Mammary epithelial cell (primary cell): ENCODE measurements at regions of chr13 and their contacts with region 1.

Region 1: DNA sequence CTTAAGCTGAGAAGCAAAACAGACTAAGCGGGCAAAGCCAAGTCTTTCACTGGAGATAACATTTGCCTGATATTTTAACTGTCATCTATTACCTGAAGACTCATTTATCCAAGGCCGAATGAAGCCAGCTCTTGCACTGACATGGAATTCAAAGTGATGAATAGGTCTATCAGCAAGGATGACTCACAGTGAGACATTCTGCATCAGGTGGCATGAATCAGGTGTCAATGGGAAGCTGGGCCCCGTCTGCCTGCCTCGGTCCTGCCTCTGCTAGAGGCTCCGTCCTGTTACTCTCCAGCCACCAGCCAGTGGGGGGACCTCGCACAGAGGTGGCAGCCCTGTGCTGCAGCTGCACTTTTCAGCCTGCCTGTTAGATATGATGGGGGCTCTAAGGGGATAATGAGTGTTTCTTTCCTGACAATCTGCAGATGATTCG is 23.5 kb downstream of the STARD13 start:
- DNase-seq: peak; percentile 91
- H3K4me3 ChIP-seq: no peak overlapping the region
- H3K27ac ChIP-seq: no peak overlapping the region
- H3K4me1 ChIP-seq: peaks cover 36% of the 10 kb centered on the region
- H3K27me3 ChIP-seq: no peaks in the 10 kb centered on the region
- CTCF ChIP-seq: no peak

Region 2: DNA sequence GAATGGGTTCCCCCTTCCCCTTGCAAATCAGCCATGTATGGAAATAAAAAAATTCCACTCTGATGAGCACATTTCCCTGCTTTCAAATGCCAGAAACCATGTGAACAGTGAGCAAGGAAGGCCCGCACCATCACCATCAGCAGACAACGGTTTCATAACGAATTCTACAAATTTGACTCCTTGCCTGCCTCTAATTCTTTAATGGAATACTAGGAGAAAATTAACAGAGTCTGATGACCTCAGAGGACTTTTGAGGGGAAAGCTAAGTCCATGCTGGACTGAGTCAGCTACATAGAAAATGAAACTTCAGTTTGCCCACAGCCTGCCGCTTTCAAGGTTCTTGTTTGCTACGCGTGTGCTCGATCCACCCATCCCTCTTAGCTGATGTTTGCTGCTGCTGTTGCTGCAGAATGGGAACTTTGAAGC is 292.6 kb before region 1 on chr13:
- CTCF ChIA-PET with region 1: no interaction called
- dilution Hi-C with region 1: no loop called
- in situ Hi-C with region 1: no loop called
- intact Hi-C with region 1: no loop called
- DNase-seq: no peak
- H3K4me3 ChIP-seq: no peak overlapping the region
- H3K27ac ChIP-seq: no peak overlapping the region
- H3K4me1 ChIP-seq: no peaks in the 10 kb centered on the region
- H3K27me3 ChIP-seq: no peaks in the 10 kb centered on the region
- CTCF ChIP-seq: no peak

Region 3: DNA sequence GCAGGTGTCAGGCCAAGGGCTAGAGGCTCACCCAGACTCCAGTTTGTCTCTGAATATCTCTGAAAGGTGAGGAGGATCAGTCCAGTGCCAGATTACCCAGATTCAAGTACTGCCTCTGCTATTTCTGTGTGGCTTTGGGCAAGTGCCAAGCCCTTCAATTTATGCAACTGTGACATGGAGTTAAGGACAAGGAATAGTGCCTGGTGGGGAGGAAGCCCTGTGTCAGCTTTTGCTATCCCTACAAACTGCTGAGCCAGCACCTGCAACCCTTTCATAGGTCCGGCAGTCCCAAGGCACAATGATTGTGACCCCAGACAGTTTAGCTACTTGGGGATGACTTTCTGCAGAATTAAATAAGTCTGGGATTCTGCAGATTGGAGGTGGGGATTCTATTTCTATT is 122.9 kb before region 1 on chr13:
- CTCF ChIA-PET with region 1: no interaction called
- dilution Hi-C with region 1: no loop called
- in situ Hi-C with region 1: no loop called
- intact Hi-C with region 1: no loop called
- DNase-seq: no peak
- H3K4me3 ChIP-seq: no peak overlapping the region
- H3K27ac ChIP-seq: no peak overlapping the region
- H3K4me1 ChIP-seq: no peaks in the 10 kb centered on the region
- H3K27me3 ChIP-seq: no peaks in the 10 kb centered on the region
- CTCF ChIP-seq: no peak

Region 4: DNA sequence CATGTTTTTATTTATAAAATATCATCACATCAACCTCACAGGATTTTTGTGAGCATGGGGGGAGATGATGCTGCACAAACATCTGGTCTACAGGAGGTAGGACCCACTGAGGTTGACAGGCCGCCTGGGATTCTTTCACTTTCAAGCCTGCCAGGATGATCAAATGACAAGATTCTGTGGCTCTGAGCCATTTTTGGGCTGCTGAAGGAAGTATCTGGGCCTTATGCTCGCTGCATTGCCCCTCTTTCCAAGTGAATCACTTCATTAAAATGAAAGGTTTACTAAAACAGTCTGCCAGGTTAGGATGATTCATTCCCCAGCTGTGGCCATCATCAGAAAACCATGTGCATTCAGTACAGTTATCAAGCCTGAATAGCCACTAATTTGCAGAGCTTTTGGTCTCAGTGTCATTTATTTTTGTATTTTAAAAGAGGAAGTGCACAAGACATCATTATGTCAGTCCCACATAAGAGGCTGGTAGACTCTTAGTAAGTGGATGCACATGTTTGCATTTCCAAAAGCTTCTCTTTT is 10.9 kb before region 1 on chr13:
- CTCF ChIA-PET with region 1: no interaction called
- dilution Hi-C with region 1: no loop called
- in situ Hi-C with region 1: no loop called
- intact Hi-C with region 1: loop called (anchors 1 kb)
- DNase-seq: peak; percentile 85
- H3K4me3 ChIP-seq: peak overlapping the region in 1 of 3 experiments; percentile 13
- H3K27ac ChIP-seq: peak overlapping the region; percentile 25
- H3K4me1 ChIP-seq: peaks cover 38% of the 10 kb centered on the region
- H3K27me3 ChIP-seq: no peaks in the 10 kb centered on the region
- CTCF ChIP-seq: no peak

Region 5: GRCh38 chr13:33285420-33286124 is 23.5 kb after region 1 on chr13 and contains the start of gene STARD13:
- CTCF ChIA-PET with region 1: no interaction called
- dilution Hi-C with region 1: no loop called
- in situ Hi-C with region 1: no loop called
- intact Hi-C with region 1: loop called (anchors 1 kb)
- DNase-seq: peak; percentile 96
- H3K4me3 ChIP-seq: peak within 1 kb of the TSS; percentile 67 to 94 (median 71)
- H3K27ac ChIP-seq: peak within 1 kb of the TSS; percentile 99
- H3K4me1 ChIP-seq: peaks cover 29% of the 10 kb centered on the region
- H3K27me3 ChIP-seq: no peaks in the 10 kb centered on the region
- CTCF ChIP-seq: peak; percentile 20 to 36
- total RNA-seq, gene STARD13: 10.8 to 15.5 TPM

Region 6: DNA sequence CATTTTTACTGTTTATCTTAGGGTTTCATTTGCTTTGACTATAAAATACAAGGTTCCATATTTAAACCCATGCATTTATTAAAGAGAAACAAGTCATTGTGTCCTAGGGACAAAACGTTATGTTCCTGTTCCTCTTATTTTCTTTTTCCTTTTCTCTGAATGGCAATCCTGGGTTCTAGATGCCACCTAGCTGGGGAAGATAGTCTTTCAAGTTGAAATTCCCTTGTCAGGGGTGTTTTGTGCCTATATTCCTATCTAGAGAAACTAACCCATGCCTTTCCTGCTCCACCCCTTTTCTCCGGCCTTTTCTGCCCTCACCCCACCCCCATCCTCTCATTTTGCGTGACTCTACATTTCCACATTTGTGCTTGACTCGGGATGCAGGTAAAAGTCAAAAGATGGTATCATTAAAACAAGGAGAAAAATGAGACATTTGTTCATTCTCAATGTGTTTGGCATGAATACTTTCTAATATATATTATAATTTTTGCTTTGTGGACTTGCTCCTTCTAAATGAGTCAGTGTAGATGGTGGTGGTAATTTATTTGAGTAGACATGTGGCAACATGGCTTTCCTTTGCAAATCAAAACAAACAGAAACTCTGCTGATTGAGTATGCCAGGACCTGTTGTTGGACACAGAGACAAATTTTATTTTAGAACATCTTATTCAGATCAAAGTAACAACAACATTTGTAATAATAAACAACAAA is 50.2 kb after region 1 on chr13:
- CTCF ChIA-PET with region 1: no interaction called
- dilution Hi-C with region 1: no loop called
- in situ Hi-C with region 1: no loop called
- intact Hi-C with region 1: loop called (anchors 2 kb)
- DNase-seq: peak; percentile 36
- H3K4me3 ChIP-seq: no peak overlapping the region
- H3K27ac ChIP-seq: no peak overlapping the region
- H3K4me1 ChIP-seq: no peaks in the 10 kb centered on the region
- H3K27me3 ChIP-seq: no peaks in the 10 kb centered on the region
- CTCF ChIP-seq: peak in 1 of 2 donors; percentile 45

Region 7: GRCh38 chr13:33401238-33401637 is 139.2 kb after region 1 on chr13:
- CTCF ChIA-PET with region 1: no interaction called
- dilution Hi-C with region 1: no loop called
- in situ Hi-C with region 1: no loop called
- intact Hi-C with region 1: no loop called
- DNase-seq: no peak
- H3K4me3 ChIP-seq: no peak overlapping the region
- H3K27ac ChIP-seq: no peak overlapping the region
- H3K4me1 ChIP-seq: no peaks in the 10 kb centered on the region
- H3K27me3 ChIP-seq: no peaks in the 10 kb centered on the region
- CTCF ChIP-seq: no peak

Region 8: DNA sequence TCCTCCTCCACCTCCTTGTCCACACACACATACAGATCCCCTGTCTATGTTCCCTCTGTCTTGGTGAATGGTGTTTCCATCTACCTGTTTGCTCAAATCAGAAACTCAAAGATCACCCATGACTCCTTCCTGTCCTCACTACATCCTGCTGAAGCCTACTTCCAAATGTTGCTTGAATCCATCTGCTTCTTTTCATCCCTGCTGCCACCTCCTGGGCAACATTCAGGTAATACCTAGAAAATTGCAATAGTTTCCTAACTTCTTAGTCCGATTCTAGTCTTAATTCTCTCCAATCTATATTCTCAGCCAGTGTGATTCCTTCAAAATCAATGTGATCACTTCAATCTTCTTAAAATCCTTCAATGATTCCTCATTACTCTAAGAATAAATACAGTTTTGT is 178.9 kb after region 1 on chr13:
- CTCF ChIA-PET with region 1: no interaction called
- dilution Hi-C with region 1: no loop called
- in situ Hi-C with region 1: no loop called
- intact Hi-C with region 1: loop called (anchors 1 kb)
- DNase-seq: peak; percentile 36
- H3K4me3 ChIP-seq: no peak overlapping the region
- H3K27ac ChIP-seq: no peak overlapping the region
- H3K4me1 ChIP-seq: no peaks in the 10 kb centered on the region
- H3K27me3 ChIP-seq: no peaks in the 10 kb centered on the region
- CTCF ChIP-seq: peak; percentile 31 to 55